ENCODE measurements at regions of chr19 and their contacts with region 1.

Region 1: GRCh38 chr19:19663256-19664038 is at the start of gene ATP13A1:
- DNase-seq: peak; percentile 89 to 99 (median 94)
- ATAC-seq: peak; percentile 63
- H3K4me3 ChIP-seq: peak within 1 kb of the TSS; percentile 67 to 93
- H3K4me3 Mint-ChIP-seq: peak within 1 kb of the TSS; percentile 90
- H3K27ac ChIP-seq: peak within 1 kb of the TSS; percentile 88 to 97
- H3K27ac Mint-ChIP-seq: peak within 1 kb of the TSS; percentile 99
- H3K4me1 ChIP-seq: peaks cover 36% of the 10 kb centered on the region
- H3K4me1 Mint-ChIP-seq: peaks cover 43% of the 10 kb centered on the region
- H3K27me3 ChIP-seq: no peaks in the 10 kb centered on the region
- H3K27me3 Mint-ChIP-seq: no peaks in the 10 kb centered on the region
- CTCF ChIP-seq: peak; percentile 34
- total RNA-seq, gene ATP13A1: 79.4 to 87.9 TPM

Region 2: DNA sequence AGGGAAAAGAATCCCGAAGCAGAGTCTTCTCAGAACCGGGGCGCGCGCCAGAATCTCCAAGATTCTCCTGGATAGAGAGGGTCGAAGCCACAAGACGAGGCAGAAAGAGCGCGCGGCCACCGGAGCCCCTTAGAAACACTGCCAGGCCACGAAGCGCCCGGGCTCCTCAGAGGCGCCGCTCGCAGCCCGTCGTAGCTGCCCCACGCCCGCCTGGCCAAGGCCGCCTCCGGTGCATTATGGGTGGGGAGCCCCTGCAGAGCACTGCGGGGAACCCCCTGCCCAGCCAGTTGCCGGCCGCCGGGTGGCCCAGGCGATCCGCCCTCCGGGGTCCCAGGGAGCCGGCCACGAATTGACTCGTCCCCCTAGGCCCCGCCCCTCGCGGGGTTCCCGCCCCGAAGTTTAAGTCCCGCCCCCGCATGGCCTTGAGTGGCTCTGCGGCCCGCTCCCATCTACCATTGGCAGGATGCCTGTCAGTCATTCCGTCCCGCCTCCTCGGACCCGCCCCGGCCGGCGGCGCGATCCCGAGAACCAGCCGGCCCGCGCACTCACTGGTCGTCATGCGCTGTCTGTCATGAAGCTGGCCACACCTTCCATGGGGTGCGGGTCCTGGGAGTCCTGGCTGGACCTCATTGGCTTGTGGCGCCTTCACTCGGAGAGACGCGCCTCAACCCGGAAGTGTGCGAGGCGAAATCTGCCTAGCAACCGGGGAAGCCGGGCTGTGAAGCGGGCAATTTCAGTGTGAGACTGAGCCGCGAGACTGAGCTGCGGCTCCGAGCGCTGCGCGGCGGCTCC is 278.1 kb before region 1 on chr19:
- CTCF ChIA-PET with region 1: no interaction called
- POLR2A ChIA-PET with region 1: no interaction called
- intact Hi-C with region 1: loop called in 1 of 2 experiments (anchors 1 kb)
- DNase-seq: peak; percentile 99 to 100 (median 99)
- ATAC-seq: peak; percentile 86
- H3K4me3 ChIP-seq: peak overlapping the region; percentile 73 to 84
- H3K4me3 Mint-ChIP-seq: peak overlapping the region; percentile 93
- H3K27ac ChIP-seq: peak overlapping the region; percentile 71 to 88
- H3K27ac Mint-ChIP-seq: peak overlapping the region; percentile 92
- H3K4me1 ChIP-seq: peaks cover 45% of the 10 kb centered on the region
- H3K4me1 Mint-ChIP-seq: peaks cover 39% of the 10 kb centered on the region
- H3K27me3 ChIP-seq: no peaks in the 10 kb centered on the region
- H3K27me3 Mint-ChIP-seq: no peaks in the 10 kb centered on the region
- CTCF ChIP-seq: no peak

Region 3: GRCh38 chr19:19597809-19598306 is 65.6 kb before region 1 on chr19:
- CTCF ChIA-PET with region 1: no interaction called
- POLR2A ChIA-PET with region 1: interaction called, 8 read pairs
- intact Hi-C with region 1: loop called (anchors 1 to 2 kb)
- DNase-seq: peak in 7 of 9 experiments; percentile 22 to 96 (median 62)
- ATAC-seq: peak; percentile 69
- H3K4me3 ChIP-seq: peak overlapping the region in 1 of 2 experiments; percentile 8
- H3K4me3 Mint-ChIP-seq: peak overlapping the region; percentile 37
- H3K27ac ChIP-seq: peak overlapping the region; percentile 94 to 95
- H3K27ac Mint-ChIP-seq: peak overlapping the region; percentile 99
- H3K4me1 ChIP-seq: peaks cover 58% of the 10 kb centered on the region
- H3K4me1 Mint-ChIP-seq: peaks cover 53% of the 10 kb centered on the region
- H3K27me3 ChIP-seq: no peaks in the 10 kb centered on the region
- H3K27me3 Mint-ChIP-seq: no peaks in the 10 kb centered on the region
- CTCF ChIP-seq: no peak

Region 4: DNA sequence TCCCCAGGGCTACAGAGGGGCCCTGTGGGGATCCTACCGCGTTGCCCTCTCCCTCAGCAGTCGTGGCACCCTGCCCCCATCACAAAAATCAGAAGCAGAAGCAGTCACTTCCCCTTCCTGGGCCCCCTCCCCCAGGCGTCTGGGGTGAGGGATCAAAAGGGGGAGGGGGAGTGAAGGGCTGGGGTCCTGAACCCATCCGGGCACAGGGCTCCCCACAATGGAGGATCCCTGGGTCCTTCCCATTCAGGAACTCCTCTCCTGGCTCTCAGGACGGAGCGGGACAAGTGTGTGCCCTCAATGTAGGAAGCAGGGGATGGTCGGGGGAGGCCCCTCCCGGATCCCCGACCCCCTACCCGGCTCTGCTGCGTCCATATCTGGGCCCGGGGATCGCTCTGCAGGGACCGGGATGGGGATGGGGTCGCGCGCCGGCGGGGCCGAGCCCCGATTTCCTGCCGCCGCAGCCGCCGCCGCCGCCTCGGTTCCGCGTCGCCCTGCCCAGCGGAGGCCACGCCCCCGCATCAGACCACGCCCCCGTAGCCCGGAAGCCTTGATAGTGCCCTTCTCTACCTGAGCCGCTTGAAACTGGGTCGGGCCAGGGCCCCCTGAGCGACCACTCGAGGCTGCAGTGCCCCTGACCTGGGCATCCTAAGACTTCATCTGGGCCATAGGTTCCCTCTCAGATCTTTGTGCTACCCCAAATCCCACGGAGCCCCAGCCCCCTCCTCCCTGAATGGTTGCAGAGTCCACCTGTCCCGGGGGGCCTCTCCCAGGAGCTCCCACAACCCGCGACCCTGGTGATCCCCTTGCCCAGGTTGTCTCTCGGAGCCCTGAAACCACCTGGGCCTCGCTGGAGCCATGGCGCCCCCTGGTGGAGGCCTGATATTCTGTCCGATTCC is 20.0 kb before region 1 on chr19 and contains the start of gene GMIP:
- CTCF ChIA-PET with region 1: interaction called, 7 read pairs
- POLR2A ChIA-PET with region 1: interaction called, 12 read pairs
- intact Hi-C with region 1: loop called (anchors 1 kb)
- DNase-seq: peak; percentile 79 to 96 (median 91)
- ATAC-seq: peak; percentile 93
- H3K4me3 ChIP-seq: peak within 1 kb of the TSS; percentile 100
- H3K4me3 Mint-ChIP-seq: peak within 1 kb of the TSS; percentile 95
- H3K27ac ChIP-seq: peak within 1 kb of the TSS; percentile 92 to 93
- H3K27ac Mint-ChIP-seq: peak within 1 kb of the TSS; percentile 93
- H3K4me1 ChIP-seq: peaks cover 20% of the 10 kb centered on the region
- H3K4me1 Mint-ChIP-seq: peaks cover 20% of the 10 kb centered on the region
- H3K27me3 ChIP-seq: no peaks in the 10 kb centered on the region
- H3K27me3 Mint-ChIP-seq: no peaks in the 10 kb centered on the region
- CTCF ChIP-seq: peak; percentile 83
- total RNA-seq, gene GMIP: 82.7 to 85.7 TPM

Region 5: GRCh38 chr19:19732579-19733501 is 69.4 kb after region 1 on chr19 and contains the start of gene ZNF14:
- CTCF ChIA-PET with region 1: no interaction called
- POLR2A ChIA-PET with region 1: interaction called, 75 read pairs
- intact Hi-C with region 1: loop called (anchors 1 kb)
- DNase-seq: peak; percentile 77 to 96 (median 92)
- ATAC-seq: peak; percentile 99
- H3K4me3 ChIP-seq: peak within 1 kb of the TSS; percentile 84 to 99
- H3K4me3 Mint-ChIP-seq: peak within 1 kb of the TSS; percentile 100
- H3K27ac ChIP-seq: peak within 1 kb of the TSS; percentile 79 to 82
- H3K27ac Mint-ChIP-seq: peak within 1 kb of the TSS; percentile 93
- H3K4me1 ChIP-seq: peaks cover 13% of the 10 kb centered on the region
- H3K4me1 Mint-ChIP-seq: peaks cover 29% of the 10 kb centered on the region
- H3K27me3 ChIP-seq: no peaks in the 10 kb centered on the region
- H3K27me3 Mint-ChIP-seq: no peaks in the 10 kb centered on the region
- CTCF ChIP-seq: no peak
- total RNA-seq, gene ZNF14: 40.7 to 44.9 TPM

Region 6: DNA sequence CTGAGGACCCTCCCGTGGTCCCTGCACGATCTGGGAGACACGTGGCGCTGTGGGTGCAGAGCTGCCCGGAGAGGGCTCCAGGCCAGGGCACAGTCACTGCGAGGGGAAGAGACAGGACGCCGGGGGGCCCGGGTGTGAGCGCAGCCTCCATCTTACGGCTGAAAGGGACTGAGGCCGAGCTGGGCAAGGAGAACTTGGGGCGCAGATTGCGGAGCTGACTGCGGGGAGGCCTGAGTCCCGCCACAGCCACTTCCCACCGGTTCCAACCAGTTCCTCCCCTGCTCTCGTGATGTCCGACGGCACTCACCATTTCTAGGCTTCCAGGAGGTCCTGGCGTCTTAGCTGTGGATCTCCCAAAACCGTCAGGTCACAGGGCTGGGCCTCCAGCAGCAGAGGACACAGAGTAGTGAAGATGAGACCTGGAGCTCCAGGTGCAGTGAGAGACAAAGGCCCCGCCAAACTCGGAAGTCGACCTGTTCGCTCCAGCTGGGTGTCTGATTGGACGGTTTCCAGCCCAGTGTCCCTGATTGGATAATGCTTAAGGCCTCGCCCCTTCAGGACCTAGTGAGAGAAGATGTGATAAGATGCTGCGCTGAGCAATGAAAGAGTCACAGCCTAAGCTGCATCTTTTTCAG is 197.4 kb after region 1 on chr19:
- CTCF ChIA-PET with region 1: no interaction called
- POLR2A ChIA-PET with region 1: interaction called, 49 read pairs
- intact Hi-C with region 1: loop called (anchors 1 to 2 kb)
- DNase-seq: peak in 8 of 9 experiments; percentile 6 to 80 (median 62)
- ATAC-seq: peak; percentile 50
- H3K4me3 ChIP-seq: peak overlapping the region; percentile 2 to 11
- H3K4me3 Mint-ChIP-seq: peak overlapping the region; percentile 76
- H3K27ac ChIP-seq: no peak overlapping the region
- H3K27ac Mint-ChIP-seq: peak overlapping the region; percentile 64
- H3K4me1 ChIP-seq: no peaks in the 10 kb centered on the region
- H3K4me1 Mint-ChIP-seq: peaks cover 10% of the 10 kb centered on the region
- H3K27me3 ChIP-seq: no peaks in the 10 kb centered on the region
- H3K27me3 Mint-ChIP-seq: no peaks in the 10 kb centered on the region
- CTCF ChIP-seq: no peak